SK-N-SH (cell line): ENCODE measurements at regions of chr21 and their contacts with region 1.

Region 1: GRCh38 chr21:15592271-15592860 is 137.4 kb upstream of the USP25 start:
- DNase-seq: peak; percentile 27
- H3K4me3 ChIP-seq: no peak overlapping the region; a peak in 1 of 4 replicates
- H3K27ac ChIP-seq: no peak overlapping the region
- H3K4me1 ChIP-seq: no peaks in the 10 kb centered on the region
- H3K27me3 ChIP-seq: no peaks in the 10 kb centered on the region
- CTCF ChIP-seq: peak; percentile 71
- EP300 ChIP-seq: no peak
- RAD21 ChIP-seq: peak; percentile 92

Region 2: GRCh38 chr21:14864211-14865021 is 728.0 kb before region 1 on chr21:
- CTCF ChIA-PET with region 1: interaction called, 13 read pairs
- POLR2A ChIA-PET with region 1: no interaction called
- DNase-seq: peak; percentile 12
- H3K4me3 ChIP-seq: peak overlapping the region in 1 of 2 experiments; percentile 46; a peak in 1 of 4 replicates
- H3K27ac ChIP-seq: no peak overlapping the region
- H3K4me1 ChIP-seq: no peaks in the 10 kb centered on the region
- H3K27me3 ChIP-seq: no peaks in the 10 kb centered on the region; the same call in 1 of the 2 replicates
- CTCF ChIP-seq: peak; percentile 49
- EP300 ChIP-seq: no peak
- RAD21 ChIP-seq: peak; percentile 43

Region 3: DNA sequence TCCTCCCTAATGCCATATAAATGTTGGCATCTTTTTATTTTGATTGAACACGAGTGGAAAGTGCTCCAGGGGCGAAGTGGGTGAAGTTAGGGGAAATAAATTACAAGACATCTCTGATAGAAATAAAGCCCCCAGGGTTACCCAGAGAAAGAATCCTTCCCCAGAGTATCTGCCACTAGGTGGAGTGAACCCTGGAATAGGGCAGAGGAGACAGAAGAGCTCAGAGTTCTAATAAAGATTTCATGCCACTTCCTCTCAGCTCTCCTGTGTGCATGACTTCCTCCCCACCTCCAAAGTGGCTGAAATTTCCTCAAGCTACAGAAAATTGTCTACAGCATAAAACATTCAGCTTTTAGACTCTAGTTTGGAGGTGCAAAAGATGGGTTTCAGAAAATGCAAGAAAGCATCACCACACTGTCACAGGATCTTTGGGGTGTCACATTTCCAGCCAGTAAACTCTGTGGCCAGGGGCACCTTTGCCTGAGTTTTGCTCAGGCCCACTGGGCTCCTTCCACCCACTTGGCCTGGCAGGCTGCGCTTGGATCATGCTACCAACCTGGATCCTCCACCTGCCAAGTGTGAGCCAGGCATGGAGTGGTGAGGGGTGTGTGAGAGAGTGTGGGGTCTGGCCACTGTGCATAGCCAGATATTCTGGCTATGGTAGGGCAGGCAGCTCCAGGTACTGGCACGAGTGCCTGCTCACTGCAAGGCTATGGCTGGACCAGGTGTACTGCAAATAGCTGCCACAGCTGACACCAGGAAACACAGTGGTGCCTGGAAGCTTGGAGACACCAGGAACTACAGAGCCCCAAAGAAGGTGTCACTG is 71.3 kb before region 1 on chr21:
- CTCF ChIA-PET with region 1: interaction called, 12 read pairs
- POLR2A ChIA-PET with region 1: no interaction called
- DNase-seq: peak; percentile 8
- H3K4me3 ChIP-seq: no peak overlapping the region
- H3K27ac ChIP-seq: no peak overlapping the region
- H3K4me1 ChIP-seq: no peaks in the 10 kb centered on the region
- H3K27me3 ChIP-seq: no peaks in the 10 kb centered on the region
- CTCF ChIP-seq: peak; percentile 46
- EP300 ChIP-seq: no peak
- RAD21 ChIP-seq: peak; percentile 22

Region 4: DNA sequence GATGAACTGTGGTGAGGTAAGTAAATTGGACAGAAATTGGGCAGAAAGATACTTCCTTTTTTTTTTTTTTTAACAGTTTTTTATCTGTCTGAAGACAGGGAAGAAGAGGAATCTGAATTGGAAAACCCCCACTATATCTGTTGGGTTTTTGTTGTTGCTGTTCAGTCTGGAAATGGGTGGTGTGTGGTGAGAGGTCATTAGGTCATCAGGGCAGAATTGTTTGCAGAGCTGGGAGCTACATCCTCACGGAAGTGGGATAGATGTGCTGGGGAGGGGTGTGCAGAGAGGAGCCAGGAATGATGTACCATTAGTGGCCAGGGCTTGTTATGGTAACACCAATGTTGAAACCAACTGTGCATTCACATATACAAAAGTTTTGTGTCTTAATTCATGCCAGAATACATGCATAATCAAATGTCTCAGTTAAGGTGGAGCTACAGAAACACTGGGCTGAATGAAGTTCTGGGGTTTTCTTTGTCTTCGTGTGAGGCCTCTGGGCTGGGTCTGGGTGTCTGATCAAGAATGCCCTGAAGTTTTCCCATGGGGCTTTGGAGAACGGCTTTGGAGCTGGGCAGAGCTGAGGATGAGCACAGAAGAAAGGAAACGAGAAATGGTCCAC is 149.8 kb after region 1 on chr21:
- CTCF ChIA-PET with region 1: no interaction called
- POLR2A ChIA-PET with region 1: no interaction called
- DNase-seq: no peak
- H3K4me3 ChIP-seq: no peak overlapping the region
- H3K27ac ChIP-seq: no peak overlapping the region
- H3K4me1 ChIP-seq: peaks cover 7 to 14% of the 10 kb centered on the region in 2 experiments; a peak in 3 of 4 replicates
- H3K27me3 ChIP-seq: no peaks in the 10 kb centered on the region
- CTCF ChIP-seq: no peak
- EP300 ChIP-seq: no peak
- RAD21 ChIP-seq: no peak